Activated B cell treated with CpG ODN at 0.5 μM for 24 hours (primary cell): ENCODE measurements at regions of chr13 and their contacts with region 1.

Region 1: GRCh38 chr13:48175185-48175584 is 57.8 kb upstream of the ITM2B start:
- DNase-seq: no peak
- ATAC-seq: peak; percentile 83
- H3K4me3 Mint-ChIP-seq: no peak overlapping the region
- H3K27ac Mint-ChIP-seq: no peak overlapping the region
- H3K4me1 Mint-ChIP-seq: peaks cover 7% of the 10 kb centered on the region
- H3K27me3 Mint-ChIP-seq: no peaks in the 10 kb centered on the region
- CTCF ChIP-seq: no peak

Region 2: GRCh38 chr13:48126944-48127830 is 48.0 kb before region 1 on chr13:
- CTCF ChIA-PET with region 1: no interaction called
- POLR2A ChIA-PET with region 1: no interaction called
- intact Hi-C with region 1: no loop called
- DNase-seq: no peak
- ATAC-seq: peak; percentile 90
- H3K4me3 Mint-ChIP-seq: no peak overlapping the region
- H3K27ac Mint-ChIP-seq: peak overlapping the region; percentile 9
- H3K4me1 Mint-ChIP-seq: peaks cover 7% of the 10 kb centered on the region
- H3K27me3 Mint-ChIP-seq: no peaks in the 10 kb centered on the region
- CTCF ChIP-seq: peak; percentile 74

Region 3: GRCh38 chr13:48155848-48156247 is 19.3 kb before region 1 on chr13:
- CTCF ChIA-PET with region 1: no interaction called
- POLR2A ChIA-PET with region 1: no interaction called
- intact Hi-C with region 1: loop called (anchors 2 kb)
- DNase-seq: no peak
- ATAC-seq: peak; percentile 56
- H3K4me3 Mint-ChIP-seq: peak overlapping the region; percentile 32
- H3K27ac Mint-ChIP-seq: no peak overlapping the region
- H3K4me1 Mint-ChIP-seq: peaks cover 46% of the 10 kb centered on the region
- H3K27me3 Mint-ChIP-seq: no peaks in the 10 kb centered on the region
- CTCF ChIP-seq: no peak

Region 4: GRCh38 chr13:48448959-48449614 is 273.9 kb after region 1 on chr13:
- CTCF ChIA-PET with region 1: no interaction called
- POLR2A ChIA-PET with region 1: no interaction called
- intact Hi-C with region 1: no loop called
- DNase-seq: no peak
- ATAC-seq: no peak
- H3K4me3 Mint-ChIP-seq: no peak overlapping the region
- H3K27ac Mint-ChIP-seq: no peak overlapping the region
- H3K4me1 Mint-ChIP-seq: peaks cover 7% of the 10 kb centered on the region
- H3K27me3 Mint-ChIP-seq: no peaks in the 10 kb centered on the region
- CTCF ChIP-seq: no peak

Region 5: DNA sequence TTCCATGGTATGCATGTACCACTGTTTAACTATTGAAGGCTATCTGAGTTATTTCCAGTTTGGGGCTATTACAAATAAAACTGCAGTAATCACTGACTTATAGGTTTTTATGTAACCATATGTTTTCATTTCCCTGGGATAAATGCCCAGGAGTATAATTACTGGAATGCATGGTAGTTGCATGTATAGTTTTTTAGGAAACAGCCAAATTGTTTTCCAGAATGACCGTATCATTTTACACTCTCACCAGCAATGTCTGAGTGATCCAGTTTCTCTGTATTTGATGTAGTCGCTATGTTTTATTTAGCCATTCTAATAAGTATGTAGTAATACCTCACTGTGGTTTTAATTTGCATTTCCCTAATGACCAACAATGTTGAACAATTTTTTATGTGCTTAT is 520.6 kb after region 1 on chr13:
- CTCF ChIA-PET with region 1: no interaction called
- POLR2A ChIA-PET with region 1: no interaction called
- intact Hi-C with region 1: no loop called
- DNase-seq: no peak
- ATAC-seq: no peak
- H3K4me3 Mint-ChIP-seq: no peak overlapping the region
- H3K27ac Mint-ChIP-seq: no peak overlapping the region
- H3K4me1 Mint-ChIP-seq: no peaks in the 10 kb centered on the region
- H3K27me3 Mint-ChIP-seq: peaks cover 8% of the 10 kb centered on the region
- CTCF ChIP-seq: no peak